T-cell (primary cell): ENCODE measurements at regions of chr9 and their contacts with region 1.

Region 1: DNA sequence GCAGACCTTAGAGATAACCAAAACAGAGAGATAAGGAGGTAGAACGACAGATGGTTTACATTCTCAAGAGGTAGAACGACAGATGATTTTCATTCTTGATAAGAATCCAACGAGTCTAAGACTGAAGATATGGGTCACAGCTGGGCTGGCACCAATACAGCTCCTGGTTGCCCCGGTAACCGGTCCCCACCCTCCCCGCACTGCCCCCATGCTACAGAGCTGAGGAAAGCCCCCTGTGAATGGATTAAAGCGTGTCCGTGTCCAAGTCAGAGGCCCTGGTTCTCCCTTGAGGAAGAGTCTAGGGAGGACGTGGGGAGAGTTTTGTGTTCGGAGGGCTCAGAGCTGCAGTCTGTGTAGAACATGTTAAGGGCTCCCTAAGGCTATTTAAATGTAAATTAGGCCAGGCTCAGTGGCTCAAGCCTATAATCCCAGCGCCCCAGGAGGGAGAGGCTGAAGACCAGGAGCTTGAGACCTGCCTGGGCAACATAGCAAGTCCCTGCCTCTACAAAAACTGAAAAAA is 8.1 kb downstream of the IDNK start:
- DNase-seq: no peak
- ATAC-seq: no peak
- H3K4me3 ChIP-seq: no peak overlapping the region
- H3K4me3 Mint-ChIP-seq: no peak overlapping the region
- H3K27ac ChIP-seq: no peak overlapping the region
- H3K27ac Mint-ChIP-seq: peak overlapping the region in 1 of 2 donors; percentile 8
- H3K4me1 ChIP-seq: no peaks in the 10 kb centered on the region
- H3K4me1 Mint-ChIP-seq: peaks cover 5% of the 10 kb centered on the region in 3 donors
- H3K27me3 ChIP-seq: no peaks in the 10 kb centered on the region
- H3K27me3 Mint-ChIP-seq: no peaks in the 10 kb centered on the region

Region 2: GRCh38 chr9:82650368-82650767 is 980.6 kb before region 1 on chr9:
- CTCF ChIA-PET with region 1: no interaction called
- POLR2A ChIA-PET with region 1: interaction called in 1 of 2 experiments, 11 read pairs
- DNase-seq: no peak
- ATAC-seq: no peak
- H3K4me3 ChIP-seq: no peak overlapping the region
- H3K4me3 Mint-ChIP-seq: no peak overlapping the region
- H3K27ac ChIP-seq: no peak overlapping the region
- H3K27ac Mint-ChIP-seq: no peak overlapping the region
- H3K4me1 ChIP-seq: no peaks in the 10 kb centered on the region
- H3K4me1 Mint-ChIP-seq: no peaks in the 10 kb centered on the region
- H3K27me3 ChIP-seq: no peaks in the 10 kb centered on the region
- H3K27me3 Mint-ChIP-seq: no peaks in the 10 kb centered on the region

Region 3: DNA sequence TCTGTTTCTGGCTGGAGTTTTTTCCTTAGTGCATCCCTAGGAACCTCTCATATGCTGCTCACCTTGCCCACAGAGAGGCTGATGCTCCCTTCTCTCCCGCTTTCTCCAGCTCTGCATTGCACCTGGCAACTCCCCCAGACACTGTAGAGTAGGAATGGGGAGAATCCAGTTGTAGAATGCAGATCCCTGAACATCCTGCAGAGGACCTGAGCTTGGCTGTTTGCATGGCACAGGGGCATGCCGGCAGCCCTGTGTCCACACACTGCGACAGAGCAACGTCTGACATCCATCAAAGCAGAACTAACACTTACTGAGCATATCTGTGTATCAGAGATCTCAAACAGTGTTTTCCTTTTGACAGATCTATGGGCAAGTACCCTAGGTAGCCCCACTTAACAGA is 11.8 kb after region 1 on chr9:
- CTCF ChIA-PET with region 1: no interaction called
- POLR2A ChIA-PET with region 1: no interaction called
- DNase-seq: no peak
- ATAC-seq: no peak
- H3K4me3 ChIP-seq: no peak overlapping the region
- H3K4me3 Mint-ChIP-seq: no peak overlapping the region
- H3K27ac ChIP-seq: no peak overlapping the region
- H3K27ac Mint-ChIP-seq: no peak overlapping the region
- H3K4me1 ChIP-seq: no peaks in the 10 kb centered on the region
- H3K4me1 Mint-ChIP-seq: no peaks in the 10 kb centered on the region
- H3K27me3 ChIP-seq: no peaks in the 10 kb centered on the region
- H3K27me3 Mint-ChIP-seq: no peaks in the 10 kb centered on the region